Activated T-helper 2 cell treated with anti-CD3 and anti-CD28 coated beads, Interferon-gamma antibody, Interleukin-2, Interleukin-4, amounts not matched to agents 10 μg/mL and 5 μg/mL and 100 μg/mL, durations not matched to agents 14 hours and 24 hours and 36 hours (primary cell): ENCODE measurements at regions of chr11 and their contacts with region 1.

Region 1: DNA sequence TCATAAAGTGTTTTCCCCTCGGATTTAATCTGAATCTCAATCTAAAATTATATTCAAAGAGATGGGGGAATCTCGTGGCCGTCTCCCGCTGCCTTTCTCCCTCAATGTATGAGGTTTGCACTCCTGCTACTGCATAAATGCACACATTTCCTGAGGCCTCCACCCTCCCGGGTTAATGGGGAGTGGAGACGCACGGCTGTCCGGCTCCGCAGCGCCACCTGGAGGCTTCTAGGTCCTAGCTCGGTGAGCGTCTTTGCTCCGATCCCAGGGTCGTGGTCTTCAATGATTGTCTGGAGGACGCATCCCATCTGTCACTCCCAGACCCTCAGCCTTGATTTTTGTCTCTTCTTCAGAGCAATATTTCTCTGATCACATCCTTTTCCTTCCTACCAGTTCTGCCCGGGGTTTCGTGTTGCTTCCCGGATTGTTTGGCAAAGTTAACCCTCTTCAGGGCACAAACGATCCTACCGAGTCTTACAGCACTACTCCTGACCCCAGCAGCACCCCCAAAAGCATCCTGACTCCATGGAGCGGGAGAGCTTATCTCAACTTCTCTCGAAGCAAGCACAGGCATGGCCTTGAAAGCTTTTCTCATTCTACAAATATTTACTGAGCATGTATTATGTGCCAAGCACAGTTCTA is at the start of gene LMO1:
- DNase-seq: peak; percentile 61
- H3K4me3 Mint-ChIP-seq: peak within 1 kb of the TSS; percentile 20
- H3K27ac Mint-ChIP-seq: no peak within 1 kb of the TSS
- H3K4me1 Mint-ChIP-seq: peaks cover 8% of the 10 kb centered on the region
- H3K27me3 Mint-ChIP-seq: peaks cover 69% of the 10 kb centered on the region
- total RNA-seq, gene LMO1: not detected in 2 replicates

Region 2: DNA sequence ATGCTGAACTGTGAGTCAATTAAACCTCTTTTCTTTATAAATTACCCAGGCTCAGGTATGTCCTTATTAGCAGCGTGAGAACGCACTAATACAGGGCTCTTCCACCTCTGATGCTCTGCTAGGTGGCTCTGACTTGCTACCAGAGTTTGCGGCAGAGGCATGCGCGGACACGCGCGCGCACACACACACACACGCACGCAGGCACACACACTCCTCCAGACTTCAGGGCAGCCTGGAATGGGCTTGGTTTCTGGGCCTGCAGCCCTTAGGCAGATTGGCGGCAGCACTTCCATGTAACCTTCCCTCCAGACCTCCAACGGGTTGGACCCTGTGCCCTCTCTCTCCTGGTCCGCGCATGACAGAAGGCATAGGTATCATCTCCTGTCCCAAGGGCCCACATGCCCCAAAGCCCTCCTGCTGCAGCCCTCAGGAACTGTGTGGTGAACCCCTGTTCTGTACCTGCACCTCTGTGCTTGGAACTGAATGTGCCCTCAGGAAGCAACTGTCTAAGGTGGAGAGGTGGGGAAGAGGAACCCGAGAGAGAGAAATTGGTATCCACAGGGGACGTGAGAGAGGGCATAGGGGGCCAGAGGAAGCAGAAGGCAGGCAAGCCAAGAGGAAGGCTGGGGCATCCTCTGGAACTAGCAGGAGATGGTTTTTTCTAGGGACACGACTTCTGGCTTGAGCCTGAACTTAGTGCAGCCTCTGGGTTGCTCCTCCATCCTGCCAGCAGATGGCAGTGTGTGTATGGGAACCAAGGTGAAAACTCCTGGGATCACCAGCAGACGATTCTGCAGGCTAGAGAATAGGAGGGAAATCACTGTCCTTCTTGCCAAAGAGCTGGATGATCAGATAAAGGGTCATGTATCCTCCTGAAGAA is 71.6 kb before region 1 on chr11:
- intact Hi-C with region 1: loop called (anchors 2 kb)
- DNase-seq: no peak
- H3K4me3 Mint-ChIP-seq: no peak overlapping the region
- H3K27ac Mint-ChIP-seq: no peak overlapping the region
- H3K4me1 Mint-ChIP-seq: no peaks in the 10 kb centered on the region
- H3K27me3 Mint-ChIP-seq: peaks cover 7% of the 10 kb centered on the region

Region 3: GRCh38 chr11:8225589-8226036 is 38.3 kb before region 1 on chr11:
- intact Hi-C with region 1: loop called (anchors 2 kb)
- DNase-seq: peak; percentile 36
- H3K4me3 Mint-ChIP-seq: no peak overlapping the region
- H3K27ac Mint-ChIP-seq: no peak overlapping the region
- H3K4me1 Mint-ChIP-seq: peaks cover 3% of the 10 kb centered on the region
- H3K27me3 Mint-ChIP-seq: no peaks in the 10 kb centered on the region

Region 4: DNA sequence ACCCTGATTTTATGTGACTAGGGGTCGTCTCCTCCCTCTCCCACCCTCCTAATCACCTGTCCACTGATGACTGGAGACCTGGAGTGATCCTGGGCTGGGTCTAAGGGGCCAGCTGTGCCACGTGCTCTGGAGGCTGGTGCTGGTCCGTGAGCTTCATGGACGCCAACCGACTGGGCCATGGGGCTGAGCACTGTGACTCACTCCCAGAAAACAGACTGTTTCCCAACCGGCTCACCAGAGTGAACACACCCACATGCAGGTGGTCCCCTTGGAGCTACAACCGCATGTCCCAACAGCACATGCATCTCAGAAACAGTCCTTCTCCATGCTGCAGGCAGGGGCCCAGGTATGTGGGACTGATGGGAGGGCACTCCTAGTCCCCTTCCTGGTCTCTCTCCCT is 13.8 kb after region 1 on chr11:
- intact Hi-C with region 1: no loop called
- DNase-seq: no peak
- H3K4me3 Mint-ChIP-seq: no peak overlapping the region
- H3K27ac Mint-ChIP-seq: no peak overlapping the region
- H3K4me1 Mint-ChIP-seq: no peaks in the 10 kb centered on the region
- H3K27me3 Mint-ChIP-seq: peaks cover 12% of the 10 kb centered on the region